ENCODE measurements at regions of chr5 and their contacts with region 1.

Region 1: GRCh38 chr5:157245477-157245876 is 20.4 kb upstream of the CYFIP2 start:
- DNase-seq: no peak
- H3K4me3 ChIP-seq: no peak overlapping the region
- H3K4me3 Mint-ChIP-seq: peak overlapping the region in 2 of 8 donors; percentile 17
- H3K27ac ChIP-seq: peak overlapping the region; percentile 1
- H3K27ac Mint-ChIP-seq: peak overlapping the region; percentile 43 to 95 (median 76)
- H3K4me1 ChIP-seq: peaks cover 90% of the 10 kb centered on the region
- H3K4me1 Mint-ChIP-seq: peaks cover 55 to 84% (median 68%) of the 10 kb centered on the region in 4 donors
- H3K27me3 ChIP-seq: no peaks in the 10 kb centered on the region
- H3K27me3 Mint-ChIP-seq: no peaks in the 10 kb centered on the region

Region 2: DNA sequence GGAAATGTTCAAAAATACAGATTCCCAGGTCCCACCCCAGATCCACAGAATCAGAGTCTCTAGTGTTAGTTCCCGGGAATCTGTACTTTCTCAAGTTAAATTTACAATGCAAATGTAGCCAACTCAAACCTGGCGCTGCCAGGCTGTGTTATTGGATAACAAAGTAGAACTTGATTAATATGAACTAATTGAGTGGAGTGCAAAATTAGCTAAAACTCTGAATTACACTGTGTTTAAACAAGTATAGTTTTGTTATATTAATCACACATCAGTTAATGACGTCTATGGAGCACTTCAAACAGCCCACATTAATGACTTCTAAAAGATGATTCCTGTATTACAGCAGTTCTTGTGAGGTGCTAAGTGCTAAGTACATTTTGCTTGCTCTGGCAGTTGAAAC is 12.0 kb before region 1 on chr5:
- CTCF ChIA-PET with region 1: interaction called, 11 read pairs
- POLR2A ChIA-PET with region 1: interaction called, 17 read pairs
- intact Hi-C with region 1: loop called (anchors 2 kb)
- DNase-seq: peak; percentile 47 to 83 (median 74)
- H3K4me3 ChIP-seq: no peak overlapping the region
- H3K4me3 Mint-ChIP-seq: peak overlapping the region in 4 of 8 donors; percentile 25 to 55 (median 47)
- H3K27ac ChIP-seq: peak overlapping the region; percentile 41
- H3K27ac Mint-ChIP-seq: peak overlapping the region; percentile 88 to 94 (median 90)
- H3K4me1 ChIP-seq: peaks cover 76% of the 10 kb centered on the region
- H3K4me1 Mint-ChIP-seq: peaks cover 32 to 62% (median 47%) of the 10 kb centered on the region in 4 donors
- H3K27me3 ChIP-seq: no peaks in the 10 kb centered on the region
- H3K27me3 Mint-ChIP-seq: no peaks in the 10 kb centered on the region

Region 3: DNA sequence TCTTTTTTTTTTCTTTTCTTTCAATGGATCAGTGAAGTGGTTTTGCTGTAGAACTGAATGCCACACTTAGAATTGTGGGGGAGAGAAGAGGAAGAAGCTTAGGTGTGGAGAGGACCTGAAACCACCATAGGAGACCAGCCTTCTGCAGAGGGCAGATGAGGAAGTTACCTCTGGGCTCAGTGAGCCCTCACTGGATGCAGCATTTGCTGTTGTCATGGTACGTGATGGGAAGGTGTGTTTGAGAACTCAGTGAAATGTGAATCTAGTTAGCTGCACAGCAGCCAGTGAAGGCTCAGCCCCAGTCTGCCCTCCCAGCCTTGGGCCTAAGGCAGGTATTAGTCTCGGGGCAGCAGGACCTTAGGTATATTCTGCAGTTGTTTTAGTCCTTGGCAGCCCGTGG is 38.0 kb after region 1 on chr5:
- CTCF ChIA-PET with region 1: no interaction called
- POLR2A ChIA-PET with region 1: interaction called, 191 read pairs
- intact Hi-C with region 1: loop called (anchors 5 kb)
- DNase-seq: peak in 1 of 5 donors; percentile 32
- H3K4me3 ChIP-seq: no peak overlapping the region
- H3K4me3 Mint-ChIP-seq: peak overlapping the region in 7 of 8 donors; percentile 1 to 55 (median 46)
- H3K27ac ChIP-seq: no peak overlapping the region
- H3K27ac Mint-ChIP-seq: peak overlapping the region; percentile 33 to 91 (median 78)
- H3K4me1 ChIP-seq: peaks cover 88% of the 10 kb centered on the region
- H3K4me1 Mint-ChIP-seq: peaks cover 61 to 85% (median 68%) of the 10 kb centered on the region in 4 donors
- H3K27me3 ChIP-seq: no peaks in the 10 kb centered on the region
- H3K27me3 Mint-ChIP-seq: no peaks in the 10 kb centered on the region

Region 4: DNA sequence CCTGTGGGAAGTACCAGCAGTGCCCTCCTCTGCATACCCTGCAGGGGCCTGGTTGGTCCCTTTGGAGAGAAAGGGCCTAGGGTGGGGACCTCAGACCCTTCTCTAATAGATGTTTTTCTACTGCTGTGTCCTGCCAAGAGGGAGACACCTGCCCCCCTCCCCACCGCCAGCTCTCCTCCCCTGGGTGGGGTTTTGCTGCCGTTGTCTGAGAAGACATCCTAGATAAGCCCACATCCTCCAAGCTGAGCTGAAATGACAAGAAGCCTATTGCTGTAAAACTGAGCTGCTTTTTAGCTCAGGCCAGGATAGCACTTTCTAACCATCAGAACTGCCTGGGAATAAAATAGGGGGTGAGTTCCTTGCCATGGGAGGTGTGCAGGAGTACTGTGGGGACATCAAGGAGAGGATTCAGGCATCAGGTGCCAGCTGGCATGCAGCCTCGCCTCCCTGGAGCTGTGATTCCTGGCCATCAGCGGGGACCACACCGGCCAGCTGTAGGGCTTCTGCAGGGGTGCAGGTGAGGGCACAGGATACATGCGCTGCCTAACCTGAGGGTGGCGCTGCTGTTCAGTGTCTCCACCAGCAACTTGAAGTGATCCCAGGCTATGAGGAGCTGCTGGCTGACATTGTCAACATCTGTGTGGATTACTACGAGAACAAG is 58.3 kb after region 1 on chr5:
- CTCF ChIA-PET with region 1: interaction called, 237 read pairs
- POLR2A ChIA-PET with region 1: interaction called, 13 read pairs
- intact Hi-C with region 1: no loop called
- DNase-seq: peak; percentile 54 to 72 (median 66)
- H3K4me3 ChIP-seq: peak overlapping the region; percentile 27 to 33
- H3K4me3 Mint-ChIP-seq: peak overlapping the region; percentile 78 to 94 (median 86)
- H3K27ac ChIP-seq: peak overlapping the region; percentile 23
- H3K27ac Mint-ChIP-seq: peak overlapping the region; percentile 79 to 94 (median 93)
- H3K4me1 ChIP-seq: peaks cover 60% of the 10 kb centered on the region
- H3K4me1 Mint-ChIP-seq: peaks cover 48 to 69% (median 60%) of the 10 kb centered on the region in 4 donors
- H3K27me3 ChIP-seq: no peaks in the 10 kb centered on the region
- H3K27me3 Mint-ChIP-seq: no peaks in the 10 kb centered on the region

Measured in CD4-positive, alpha-beta memory T cell (primary cell).